Lower lobe of right lung (tissue), 2 donors: ENCODE measurements at regions of chr7 and their contacts with region 1.

Region 1: GRCh38 chr7:16062269-16062668 is 359.1 kb downstream of the CRPPA start:
- DNase-seq: no peak
- ATAC-seq: no peak
- H3K4me3 ChIP-seq: no peak overlapping the region
- H3K27ac ChIP-seq: no peak overlapping the region
- H3K4me1 ChIP-seq: peaks cover 29% of the 10 kb centered on the region
- H3K27me3 ChIP-seq: no peaks in the 10 kb centered on the region
- CTCF ChIP-seq: no peak

Region 2: GRCh38 chr7:15305002-15305600 is 757.2 kb before region 1 on chr7:
- intact Hi-C with region 1: loop called (anchors 10 kb)
- DNase-seq: no peak
- ATAC-seq: no peak
- H3K4me3 ChIP-seq: no peak overlapping the region
- H3K27ac ChIP-seq: no peak overlapping the region
- H3K4me1 ChIP-seq: no peaks in the 10 kb centered on the region
- H3K27me3 ChIP-seq: no peaks in the 10 kb centered on the region
- CTCF ChIP-seq: peak; percentile 62

Region 3: DNA sequence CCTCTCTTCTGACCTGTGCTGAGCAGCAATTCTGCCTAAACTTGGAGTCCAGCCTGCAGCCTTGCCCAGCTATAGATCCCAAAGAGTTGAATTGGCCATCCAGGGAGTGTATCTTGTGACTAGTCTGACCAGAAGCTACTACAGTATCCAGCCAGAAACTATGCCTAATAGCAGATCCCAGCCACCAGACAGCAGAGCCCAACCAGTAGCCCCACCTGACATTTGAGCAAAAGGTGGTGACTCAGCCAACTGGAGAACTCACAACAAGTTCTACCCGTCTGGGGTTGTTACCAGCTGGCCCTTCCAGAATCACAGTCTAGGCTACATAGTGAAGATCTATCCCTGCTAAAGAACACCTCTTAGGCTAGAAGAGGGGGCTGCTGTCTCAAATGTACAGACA is 44.0 kb after region 1 on chr7:
- intact Hi-C with region 1: no loop called
- DNase-seq: no peak
- ATAC-seq: no peak
- H3K4me3 ChIP-seq: no peak overlapping the region
- H3K27ac ChIP-seq: no peak overlapping the region
- H3K4me1 ChIP-seq: no peaks in the 10 kb centered on the region
- H3K27me3 ChIP-seq: no peaks in the 10 kb centered on the region
- CTCF ChIP-seq: no peak